Caki2 (cell line): ENCODE measurements at regions of chr10 and their contacts with region 1.

Region 1: GRCh38 chr10:110336111-110336721 is 31.5 kb upstream of the SMNDC1 start:
- DNase-seq: peak; percentile 76

Region 2: DNA sequence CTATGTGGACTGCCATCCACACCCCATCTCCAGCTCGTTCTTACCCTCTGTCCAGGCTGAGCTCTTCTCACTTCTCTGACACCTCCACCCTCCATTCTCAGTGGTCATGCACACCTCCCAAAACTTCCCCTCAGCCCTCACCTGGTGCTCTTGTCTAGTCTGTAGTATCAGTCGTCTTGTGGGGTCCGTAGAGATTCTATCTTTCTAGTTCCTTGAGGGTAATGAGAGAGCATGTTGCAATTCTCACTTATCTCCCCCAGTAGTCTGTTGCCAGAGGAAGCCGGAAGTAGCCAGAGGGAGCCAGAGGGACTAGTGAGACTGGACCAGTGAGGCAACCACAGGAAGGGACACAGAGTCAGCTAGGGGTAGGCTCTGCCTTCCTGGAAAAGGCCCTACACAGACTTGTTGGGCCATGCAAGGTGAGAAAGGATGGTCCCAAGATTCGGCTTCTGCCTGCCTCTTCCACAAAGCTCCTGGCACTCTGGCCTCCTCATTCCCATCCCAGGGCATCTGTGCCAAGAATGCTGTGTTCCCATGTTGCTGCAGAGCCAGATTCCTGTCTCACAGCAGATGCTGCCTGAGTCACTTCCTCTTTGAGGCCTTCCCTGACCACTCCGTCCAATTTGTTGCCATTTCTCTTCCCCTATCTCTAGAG is 110.9 kb after region 1 on chr10:
- in situ Hi-C with region 1: loop called (anchors 10 kb)
- DNase-seq: no peak

Region 3: DNA sequence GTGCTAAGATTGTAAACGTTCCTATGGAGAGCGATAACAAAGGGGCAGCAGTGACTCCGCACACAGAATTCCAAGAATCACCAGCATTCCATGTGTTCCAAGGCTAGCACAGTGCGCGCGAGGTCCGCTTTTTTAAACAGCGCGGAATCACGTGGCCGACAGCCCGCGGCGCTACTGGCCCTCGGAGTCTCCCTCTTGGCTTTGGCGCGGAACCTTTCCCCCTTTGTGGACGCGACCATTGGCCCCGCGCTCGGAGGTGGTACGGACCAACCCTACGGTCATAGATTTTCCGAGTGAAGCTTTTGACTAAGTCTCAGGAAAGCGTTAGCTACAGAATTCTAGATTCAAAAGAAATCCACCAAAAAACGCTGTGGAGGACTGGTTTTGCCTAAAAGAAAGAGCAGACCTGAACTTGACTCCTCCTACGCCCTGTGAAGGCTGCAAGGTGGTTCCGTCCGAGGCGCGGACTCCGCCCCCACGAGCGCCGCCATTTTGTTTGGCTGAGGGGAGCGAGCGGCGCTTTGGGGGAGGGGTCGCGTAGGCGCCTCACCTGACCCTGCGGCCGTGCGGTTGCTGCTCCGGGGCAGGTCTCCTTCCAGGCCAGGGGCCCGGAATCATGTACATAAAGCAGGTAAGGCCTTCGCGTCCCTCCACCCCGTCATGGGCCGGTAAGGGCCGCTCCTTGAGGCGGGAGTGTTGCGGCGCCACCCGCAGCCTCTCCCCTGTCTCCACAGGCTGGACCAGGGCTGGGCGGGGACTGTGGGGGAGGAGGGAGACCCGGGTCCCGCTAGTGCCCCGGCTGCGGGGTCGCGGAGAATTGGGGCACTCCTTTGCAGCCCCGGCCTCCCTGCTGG is 231.2 kb after region 1 on chr10 and contains the start of gene SMC3:
- in situ Hi-C with region 1: loop called (anchors 25 kb)
- DNase-seq: peak; percentile 96
- total RNA-seq, gene SMC3: 15.9 and 16.5 TPM in 2 replicates